ENCODE measurements at regions of chr7 and their contacts with region 1.

Region 1: GRCh38 chr7:194252-195000 is 2.1 kb downstream of the FAM20C start:
- DNase-seq: no peak
- H3K4me3 ChIP-seq: peak overlapping the region; percentile 70
- H3K27me3 ChIP-seq: no peaks in the 10 kb centered on the region
- CTCF ChIP-seq: no peak

Region 2: GRCh38 chr7:64098-64915 is 130.1 kb before region 1 on chr7:
- CTCF ChIA-PET with region 1: interaction called, 12 read pairs
- POLR2A ChIA-PET with region 1: no interaction called
- DNase-seq: no peak
- H3K4me3 ChIP-seq: no peak overlapping the region
- H3K27me3 ChIP-seq: no peaks in the 10 kb centered on the region
- CTCF ChIP-seq: peak; percentile 68

Region 3: GRCh38 chr7:95180-95862 is 99.1 kb before region 1 on chr7:
- CTCF ChIA-PET with region 1: no interaction called
- POLR2A ChIA-PET with region 1: no interaction called
- DNase-seq: no peak
- H3K4me3 ChIP-seq: no peak overlapping the region
- H3K27me3 ChIP-seq: no peaks in the 10 kb centered on the region
- CTCF ChIP-seq: no peak

Region 4: DNA sequence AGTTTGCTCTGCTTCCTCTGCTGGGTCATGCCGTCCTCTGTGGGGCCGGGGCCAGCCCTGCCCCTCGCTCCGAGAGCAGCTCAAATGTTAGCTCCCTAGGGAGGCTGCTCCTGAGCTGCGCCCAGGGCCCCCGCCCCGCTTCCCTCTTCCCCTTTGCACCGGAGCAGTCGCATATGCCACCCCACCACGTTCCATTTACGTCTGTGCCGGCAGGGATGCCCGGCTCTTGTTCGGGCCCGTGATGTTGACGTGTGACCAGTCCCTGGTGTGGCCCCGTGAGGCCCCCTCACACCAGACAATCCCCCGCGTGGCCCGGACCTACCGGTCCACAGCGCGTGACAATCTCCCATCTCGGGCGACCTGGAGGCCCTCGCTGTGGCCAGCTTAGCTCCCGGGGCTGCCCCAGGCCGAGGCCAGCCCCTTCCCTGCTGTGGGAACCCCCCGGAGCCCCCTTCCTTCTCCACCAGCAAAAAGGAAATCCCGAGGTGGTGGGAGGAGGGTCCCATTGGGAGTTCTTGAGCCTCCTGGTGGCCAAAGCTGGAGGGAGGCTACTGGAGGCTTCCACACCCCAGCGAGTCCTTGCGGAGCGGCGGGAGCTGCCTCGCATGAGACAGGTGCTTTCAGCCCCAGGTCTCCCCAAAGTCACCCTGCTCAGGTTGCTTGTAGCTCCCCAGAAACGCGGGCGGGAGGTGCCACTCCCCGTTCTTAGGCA is 13.1 kb after region 1 on chr7:
- CTCF ChIA-PET with region 1: no interaction called
- POLR2A ChIA-PET with region 1: no interaction called
- DNase-seq: no peak
- H3K4me3 ChIP-seq: no peak overlapping the region
- H3K27me3 ChIP-seq: no peaks in the 10 kb centered on the region
- CTCF ChIP-seq: peak; percentile 32